Activated CD8-positive, alpha-beta memory T cell treated with anti-CD3 and anti-CD28 coated beads, Interleukin-2, amount 10 ng/mL, durations not matched to agents 7 days and 5 days (primary cell): ENCODE measurements at regions of chr3 and their contacts with region 1.

Region 1: GRCh38 chr3:10192953-10193691 is 28.4 kb downstream of the IRAK2 start:
- DNase-seq: peak; percentile 67
- ATAC-seq: peak; percentile 11
- H3K4me3 Mint-ChIP-seq: no peak overlapping the region
- H3K27ac Mint-ChIP-seq: peak overlapping the region; percentile 98
- H3K4me1 Mint-ChIP-seq: peaks cover 79% of the 10 kb centered on the region
- H3K27me3 Mint-ChIP-seq: no peaks in the 10 kb centered on the region

Region 2: GRCh38 chr3:10041034-10041433 is 152.1 kb before region 1 on chr3:
- CTCF ChIA-PET with region 1: no interaction called
- DNase-seq: no peak
- ATAC-seq: no peak
- H3K4me3 Mint-ChIP-seq: no peak overlapping the region
- H3K27ac Mint-ChIP-seq: peak overlapping the region; percentile 29
- H3K4me1 Mint-ChIP-seq: no peaks in the 10 kb centered on the region
- H3K27me3 Mint-ChIP-seq: no peaks in the 10 kb centered on the region

Region 3: DNA sequence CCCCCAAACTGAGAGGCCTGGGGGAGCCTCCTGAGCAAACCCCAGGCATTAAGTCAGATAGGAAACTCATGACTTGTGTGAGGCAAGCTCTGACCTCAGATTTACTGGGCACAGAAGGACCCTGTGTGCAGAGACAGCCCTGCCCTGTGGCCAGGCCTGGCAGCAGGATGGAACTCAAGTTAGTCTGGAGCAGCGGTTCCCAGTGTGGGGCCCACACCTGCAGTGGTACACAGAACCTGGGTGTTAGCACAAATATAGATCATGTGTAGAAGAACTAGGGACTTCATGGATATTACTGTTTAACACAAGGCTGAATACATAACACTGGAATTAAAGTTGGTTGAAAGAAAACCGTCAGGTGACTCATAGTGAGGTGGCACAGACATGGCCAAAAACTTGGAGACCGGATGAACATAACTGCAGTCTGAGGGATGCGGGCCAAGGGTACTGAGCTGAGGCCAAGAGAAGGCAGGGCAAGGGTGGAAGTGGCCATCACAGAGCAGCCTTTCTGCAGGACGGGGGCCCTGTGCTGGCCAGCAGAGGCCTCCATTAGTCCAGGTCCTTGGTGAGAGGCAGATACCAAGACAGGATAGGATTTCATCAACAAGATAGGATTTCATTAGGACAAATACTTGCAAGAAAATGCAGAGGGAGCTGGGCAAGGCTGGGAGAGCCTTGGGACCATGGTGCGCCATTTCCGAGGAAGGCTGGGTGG is 12.5 kb after region 1 on chr3:
- CTCF ChIA-PET with region 1: interaction called, 11 read pairs
- DNase-seq: no peak
- ATAC-seq: no peak
- H3K4me3 Mint-ChIP-seq: no peak overlapping the region
- H3K27ac Mint-ChIP-seq: no peak overlapping the region
- H3K4me1 Mint-ChIP-seq: peaks cover 34% of the 10 kb centered on the region
- H3K27me3 Mint-ChIP-seq: no peaks in the 10 kb centered on the region